Activated CD4-positive, alpha-beta T cell treated with anti-CD3 and anti-CD28 coated beads for 36 hours (primary cell): ENCODE measurements at regions of chr20 and their contacts with region 1.

Region 1: DNA sequence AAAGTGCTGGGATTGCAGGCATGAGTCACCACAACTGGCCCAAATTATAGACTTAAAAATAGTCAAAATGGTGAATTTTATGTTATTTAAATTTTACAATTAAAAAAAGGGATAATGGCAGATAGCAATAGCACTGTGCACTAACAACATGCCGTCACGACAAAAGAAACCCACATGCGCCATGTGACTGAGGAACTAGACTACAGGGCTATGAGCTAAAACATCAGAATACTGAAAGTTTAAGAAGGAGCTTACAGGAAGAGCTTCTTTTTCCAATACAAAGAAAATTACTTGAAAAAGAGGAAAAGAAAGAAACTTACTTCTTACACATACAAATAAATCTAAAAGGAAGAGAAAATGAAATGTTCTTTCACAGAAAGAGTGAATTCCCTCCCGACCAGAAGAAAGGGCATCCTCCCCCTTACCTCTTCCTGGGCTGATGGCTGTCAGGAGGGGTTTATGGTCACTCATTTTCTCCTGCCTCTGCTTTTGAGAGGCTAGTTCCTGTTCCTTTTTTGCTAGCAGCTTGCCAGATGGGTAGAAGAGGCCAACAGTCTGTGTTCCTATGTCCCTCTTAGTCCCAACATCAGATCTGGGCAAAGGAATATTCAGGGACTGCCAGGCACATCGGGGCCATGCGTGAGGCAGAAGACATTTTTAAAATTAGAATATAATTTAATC is 54.5 kb downstream of the DZANK1 start:
- DNase-seq: no peak
- ATAC-seq: no peak
- H3K4me3 Mint-ChIP-seq: no peak overlapping the region
- H3K27ac Mint-ChIP-seq: no peak overlapping the region
- H3K4me1 Mint-ChIP-seq: peaks cover 3% of the 10 kb centered on the region
- H3K27me3 Mint-ChIP-seq: no peaks in the 10 kb centered on the region

Region 2: GRCh38 chr20:18496740-18497592 is 84.6 kb after region 1 on chr20 and contains the start of gene RBBP9:
- CTCF ChIA-PET with region 1: interaction called, 3 read pairs
- POLR2A ChIA-PET with region 1: no interaction called
- intact Hi-C with region 1: loop called in 1 of 2 experiments (anchors 2 kb)
- DNase-seq: peak; percentile 88
- ATAC-seq: peak; percentile 99
- H3K4me3 Mint-ChIP-seq: peak within 1 kb of the TSS; percentile 97
- H3K27ac Mint-ChIP-seq: peak within 1 kb of the TSS; percentile 83
- H3K4me1 Mint-ChIP-seq: peaks cover 12% of the 10 kb centered on the region
- H3K27me3 Mint-ChIP-seq: no peaks in the 10 kb centered on the region
- total RNA-seq, gene RBBP9: 19.9 to 20.6 TPM

Region 3: DNA sequence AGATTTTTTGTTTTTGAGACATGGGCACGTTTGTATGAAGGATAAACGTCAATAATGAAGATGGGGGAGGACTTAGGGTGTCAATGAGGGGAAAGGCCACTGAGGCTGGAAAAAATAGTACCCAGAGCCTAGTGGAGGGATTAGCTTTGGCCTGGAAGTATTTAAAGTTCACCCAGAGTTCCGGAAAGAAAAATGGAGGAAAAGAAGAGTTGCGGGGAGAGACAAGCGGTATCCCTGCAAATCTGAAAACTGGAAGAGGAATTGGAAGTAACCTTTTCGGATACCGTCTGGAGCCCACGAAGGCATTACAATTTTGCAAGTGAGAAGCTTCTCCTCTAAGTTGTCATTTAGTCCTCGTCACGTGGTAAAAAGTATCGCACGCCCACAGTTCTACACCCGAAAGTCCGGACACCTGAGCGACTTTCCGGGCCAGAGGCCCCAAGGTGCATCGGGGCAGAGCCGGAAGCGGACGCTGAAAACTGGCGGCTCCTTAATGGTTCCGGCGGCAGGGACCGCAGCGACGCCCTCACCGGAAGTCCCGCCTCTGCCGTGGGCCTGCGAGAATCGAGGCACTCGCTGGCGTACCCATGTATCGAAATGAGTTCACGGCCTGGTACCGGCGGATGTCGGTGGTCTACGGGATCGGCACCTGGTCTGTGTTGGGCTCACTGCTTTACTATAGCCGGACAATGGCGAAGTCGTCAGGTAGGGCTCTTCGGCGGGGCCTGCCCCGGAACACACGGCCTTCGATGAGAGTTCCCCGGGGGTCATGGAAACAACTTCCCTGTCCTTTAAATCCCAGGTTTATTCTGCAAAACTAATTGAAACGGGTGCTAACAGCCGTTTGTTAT is 154.8 kb after region 1 on chr20 and contains the start of gene SMIM26:
- CTCF ChIA-PET with region 1: no interaction called
- POLR2A ChIA-PET with region 1: no interaction called
- intact Hi-C with region 1: loop called in 1 of 2 experiments (anchors 5 kb)
- DNase-seq: peak; percentile 97
- ATAC-seq: peak; percentile 100
- H3K4me3 Mint-ChIP-seq: peak within 1 kb of the TSS; percentile 98
- H3K27ac Mint-ChIP-seq: peak within 1 kb of the TSS; percentile 92
- H3K4me1 Mint-ChIP-seq: peaks cover 13% of the 10 kb centered on the region
- H3K27me3 Mint-ChIP-seq: no peaks in the 10 kb centered on the region
- total RNA-seq, gene SMIM26: 64.4 to 66.2 TPM

Region 4: DNA sequence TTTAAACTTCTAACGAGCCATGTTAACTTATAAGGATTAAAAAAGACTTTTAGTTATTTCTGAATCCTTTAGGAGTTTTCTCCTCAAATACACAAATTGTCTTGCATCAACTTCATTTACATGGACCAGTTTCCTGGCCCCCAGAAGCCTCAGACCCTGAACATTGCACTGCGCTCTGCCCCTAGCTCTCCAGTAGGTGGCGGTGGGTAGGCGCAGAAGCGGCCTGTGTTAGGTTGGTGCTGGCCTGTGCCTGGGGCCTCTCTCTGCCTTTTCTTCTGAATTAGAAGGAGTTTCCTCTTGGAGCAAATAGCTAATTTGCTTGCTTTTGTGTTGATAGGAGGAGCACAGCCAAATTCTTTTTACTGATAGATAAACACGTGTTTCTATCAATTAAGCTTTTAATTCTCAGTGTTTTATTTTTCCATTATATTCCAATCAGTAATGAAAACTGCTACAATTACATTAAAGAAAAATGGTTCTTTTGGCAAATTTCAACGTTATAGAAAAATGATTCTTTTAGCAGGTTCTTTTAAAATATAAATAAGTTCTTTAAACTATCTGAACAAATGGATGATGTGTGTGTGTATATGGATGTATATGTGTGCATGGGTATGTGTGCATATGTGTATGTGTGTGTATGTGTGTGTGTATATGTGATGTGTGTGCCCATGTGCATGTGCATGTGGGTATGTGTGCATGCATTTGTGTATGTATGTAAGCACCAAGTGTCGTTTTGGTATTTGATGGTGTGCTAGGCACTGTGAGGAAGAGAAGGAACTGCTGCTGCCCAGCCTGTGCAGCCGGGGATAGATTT is 220.0 kb after region 1 on chr20:
- CTCF ChIA-PET with region 1: interaction called, 3 read pairs
- POLR2A ChIA-PET with region 1: no interaction called
- intact Hi-C with region 1: loop called (anchors 2 to 10 kb)
- DNase-seq: peak; percentile 75
- ATAC-seq: peak; percentile 97
- H3K4me3 Mint-ChIP-seq: no peak overlapping the region
- H3K27ac Mint-ChIP-seq: no peak overlapping the region
- H3K4me1 Mint-ChIP-seq: no peaks in the 10 kb centered on the region
- H3K27me3 Mint-ChIP-seq: no peaks in the 10 kb centered on the region

Region 5: DNA sequence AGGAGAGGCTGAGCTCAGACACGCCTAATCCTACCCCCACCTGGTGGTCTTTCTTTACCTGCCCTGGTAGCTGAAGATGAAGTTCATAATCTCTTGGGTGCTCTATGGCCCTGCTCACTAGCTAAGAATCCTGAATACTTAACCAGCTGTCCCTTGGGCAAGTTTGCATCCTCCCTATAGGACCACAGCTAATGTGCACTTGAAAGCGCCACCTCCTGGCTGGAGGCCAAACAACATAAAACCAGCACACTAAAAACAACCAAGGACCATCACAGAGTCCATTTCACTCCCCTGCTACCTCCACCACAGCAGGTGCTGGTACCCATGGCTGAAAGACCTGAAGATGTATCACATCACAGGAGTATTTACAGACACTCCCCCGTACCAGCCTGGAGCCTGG is 644.5 kb after region 1 on chr20:
- CTCF ChIA-PET with region 1: no interaction called
- POLR2A ChIA-PET with region 1: no interaction called
- intact Hi-C with region 1: loop called in 1 of 2 experiments (anchors 2 kb)
- DNase-seq: peak; percentile 33
- ATAC-seq: no peak
- H3K4me3 Mint-ChIP-seq: no peak overlapping the region
- H3K27ac Mint-ChIP-seq: no peak overlapping the region
- H3K4me1 Mint-ChIP-seq: no peaks in the 10 kb centered on the region
- H3K27me3 Mint-ChIP-seq: peaks cover 3% of the 10 kb centered on the region